ENCODE measurements at regions of chr13 and their contacts with region 1.

Region 1: DNA sequence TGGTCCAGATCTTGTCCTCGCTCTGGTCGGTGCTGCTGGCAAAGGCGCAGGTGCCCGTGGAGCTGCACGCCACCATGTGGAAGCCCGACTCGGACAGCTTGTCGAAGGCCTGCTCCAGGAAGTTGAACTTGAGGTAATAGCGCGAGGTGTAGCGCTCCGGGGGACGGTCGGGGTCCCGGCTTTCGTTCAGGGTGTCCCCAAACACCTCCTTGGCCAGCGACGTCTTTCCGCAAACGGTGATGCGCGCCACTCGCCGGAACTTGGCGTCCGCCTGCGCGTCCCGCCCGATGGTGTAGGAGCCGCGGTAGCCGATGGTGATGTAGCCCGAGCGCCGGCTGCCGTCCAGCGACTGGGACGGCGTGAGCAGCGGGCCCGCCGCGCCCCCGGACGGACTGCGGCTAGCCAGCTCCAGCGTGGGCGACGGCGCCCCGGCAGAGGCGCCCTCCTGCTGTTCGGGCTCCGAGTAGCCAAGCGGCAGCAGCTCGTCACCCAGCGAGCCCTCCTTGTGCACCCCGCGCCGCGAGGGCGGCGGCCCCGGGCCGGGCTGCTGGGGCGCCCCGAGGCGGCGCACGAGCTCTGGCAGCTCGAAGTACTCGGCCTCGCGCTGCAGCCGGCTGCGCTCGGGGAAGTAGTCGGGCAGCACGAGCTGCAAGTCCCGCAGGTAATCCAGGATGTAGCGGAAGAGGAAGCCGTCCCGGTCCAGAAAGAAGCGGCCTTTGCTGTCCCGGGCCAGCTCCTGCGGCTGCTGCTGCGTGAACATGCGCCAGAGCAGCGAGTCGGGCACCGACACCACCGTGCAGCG is 801 bp downstream of the KCTD12 start:
- DNase-seq: no peak
- H3K4me3 ChIP-seq: peak overlapping the region; percentile 54
- H3K27me3 ChIP-seq: peaks cover 3% of the 10 kb centered on the region; the same call in 1 of the 2 replicates
- CTCF ChIP-seq: peak; percentile 43

Region 2: GRCh38 chr13:76667551-76667950 is 217.9 kb before region 1 on chr13:
- CTCF ChIA-PET with region 1: interaction called, 40 read pairs
- POLR2A ChIA-PET with region 1: no interaction called
- DNase-seq: no peak
- H3K4me3 ChIP-seq: no peak overlapping the region
- H3K27me3 ChIP-seq: no peaks in the 10 kb centered on the region
- CTCF ChIP-seq: peak; percentile 50

Region 3: DNA sequence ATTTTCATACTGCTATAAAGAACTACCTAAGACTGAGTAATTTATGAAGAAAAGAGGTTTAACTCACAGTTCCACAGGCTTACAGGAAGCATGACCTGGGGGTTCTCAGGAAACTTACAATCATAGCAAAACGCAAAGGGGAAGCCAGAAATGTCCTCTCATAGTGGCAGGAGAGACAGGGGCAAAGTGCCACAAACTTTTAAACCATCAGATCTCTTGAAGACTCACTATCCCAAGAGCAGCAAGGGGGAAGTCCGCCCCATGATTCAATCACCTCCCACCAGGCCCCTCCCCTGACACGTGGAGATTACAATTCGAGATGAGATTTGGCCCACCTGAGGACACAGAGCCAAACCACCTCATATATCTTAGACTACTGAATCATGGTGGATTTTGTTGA is 197.9 kb before region 1 on chr13:
- CTCF ChIA-PET with region 1: no interaction called
- POLR2A ChIA-PET with region 1: no interaction called
- DNase-seq: no peak
- H3K4me3 ChIP-seq: no peak overlapping the region
- H3K27me3 ChIP-seq: no peaks in the 10 kb centered on the region
- CTCF ChIP-seq: no peak

Region 4: DNA sequence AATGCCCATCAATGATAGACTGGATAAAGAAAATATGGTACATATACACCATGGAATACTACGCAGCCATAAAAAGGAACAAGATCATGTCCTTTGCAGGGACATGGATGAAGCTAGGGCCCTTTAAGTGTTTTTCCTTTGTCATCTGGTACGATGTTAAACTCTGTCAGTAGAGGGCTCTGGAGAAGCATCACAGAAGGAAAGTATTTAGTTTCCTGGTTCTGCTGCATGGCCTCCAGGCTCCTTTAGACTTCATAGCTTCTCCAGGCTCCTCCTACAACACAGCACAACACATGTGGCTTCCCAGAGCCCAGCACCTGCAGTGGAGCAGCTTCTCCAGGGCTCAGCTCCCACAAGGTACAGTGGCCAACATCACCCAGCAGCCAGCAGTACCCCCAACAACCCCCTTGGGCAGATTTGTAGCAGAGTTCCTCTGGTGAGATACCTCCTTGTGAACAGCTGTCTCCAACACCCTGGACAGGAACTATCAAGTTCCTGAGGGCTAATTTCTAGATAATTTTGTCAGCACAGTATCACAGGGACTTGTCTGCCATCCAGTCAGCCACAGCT is 62.6 kb before region 1 on chr13:
- CTCF ChIA-PET with region 1: interaction called, 47 read pairs
- POLR2A ChIA-PET with region 1: no interaction called
- DNase-seq: no peak
- H3K4me3 ChIP-seq: no peak overlapping the region
- H3K27me3 ChIP-seq: no peaks in the 10 kb centered on the region; the same call in 1 of the 2 replicates
- CTCF ChIP-seq: peak; percentile 39

Region 5: GRCh38 chr13:76874479-76874878 is 10.9 kb before region 1 on chr13:
- CTCF ChIA-PET with region 1: interaction called, 11 read pairs
- POLR2A ChIA-PET with region 1: no interaction called
- DNase-seq: no peak
- H3K4me3 ChIP-seq: no peak overlapping the region
- H3K27me3 ChIP-seq: no peaks in the 10 kb centered on the region
- CTCF ChIP-seq: no peak

Region 6: GRCh38 chr13:77544355-77544754 is 659.0 kb after region 1 on chr13:
- CTCF ChIA-PET with region 1: no interaction called
- POLR2A ChIA-PET with region 1: no interaction called
- DNase-seq: no peak
- H3K4me3 ChIP-seq: no peak overlapping the region
- H3K27me3 ChIP-seq: no peaks in the 10 kb centered on the region; the same call in 1 of the 2 replicates
- CTCF ChIP-seq: no peak

Region 7: GRCh38 chr13:77751513-77752456 is 866.4 kb after region 1 on chr13:
- CTCF ChIA-PET with region 1: no interaction called
- POLR2A ChIA-PET with region 1: interaction called, 11 read pairs
- DNase-seq: no peak
- H3K4me3 ChIP-seq: no peak overlapping the region
- H3K27me3 ChIP-seq: no peaks in the 10 kb centered on the region
- CTCF ChIP-seq: peak; percentile 82